WTC11 (cell line): ENCODE measurements at regions of chr1 and their contacts with region 1.

Region 1: DNA sequence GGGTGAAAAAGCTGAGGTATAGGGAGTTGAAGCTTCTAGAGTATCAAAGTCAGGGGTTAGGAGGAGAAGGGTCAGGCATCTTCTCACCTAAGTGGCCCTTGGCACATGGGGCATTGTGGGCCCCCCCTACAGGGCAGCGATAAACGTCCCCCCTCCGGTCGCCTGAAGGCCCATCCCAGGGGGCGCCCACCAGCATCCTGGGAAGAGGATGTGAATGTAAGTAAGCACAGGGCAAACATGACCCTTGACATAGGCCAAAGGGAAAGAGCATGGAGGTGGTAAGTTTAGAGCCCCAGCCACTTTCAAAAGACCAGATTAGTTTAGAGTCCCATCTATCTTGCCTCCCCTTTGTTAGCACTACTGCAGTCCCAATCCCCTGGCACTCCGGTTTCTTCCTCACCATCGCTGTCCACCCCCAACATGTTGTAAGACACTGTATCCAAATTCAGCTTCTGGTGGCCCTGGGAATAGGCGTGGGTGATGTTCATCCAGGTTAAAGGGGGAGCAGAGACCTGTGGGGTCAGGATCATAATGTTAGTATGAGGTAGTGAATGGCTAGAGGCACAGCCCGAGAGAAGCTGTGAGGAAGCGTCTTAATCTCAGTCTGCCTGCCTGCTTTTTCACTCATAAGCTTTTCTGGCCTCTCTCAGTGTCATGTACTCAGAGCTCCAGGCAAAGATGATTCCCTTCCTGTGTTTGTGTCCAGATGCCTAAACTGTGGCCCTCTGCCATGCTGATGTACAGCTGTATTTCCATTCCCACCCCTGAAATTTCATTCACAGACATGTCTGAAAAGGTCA is 2.7 kb downstream of the ITGA10 start:
- DNase-seq: no peak
- ATAC-seq: peak; percentile 25; the same call in 1 of the 2 replicates
- H3K4me3 Mint-ChIP-seq: no peak overlapping the region
- H3K27ac Mint-ChIP-seq: no peak overlapping the region
- H3K4me1 Mint-ChIP-seq: peaks cover 14% of the 10 kb centered on the region
- H3K27me3 Mint-ChIP-seq: peaks cover 3% of the 10 kb centered on the region
- CTCF ChIP-seq: no peak

Region 2: DNA sequence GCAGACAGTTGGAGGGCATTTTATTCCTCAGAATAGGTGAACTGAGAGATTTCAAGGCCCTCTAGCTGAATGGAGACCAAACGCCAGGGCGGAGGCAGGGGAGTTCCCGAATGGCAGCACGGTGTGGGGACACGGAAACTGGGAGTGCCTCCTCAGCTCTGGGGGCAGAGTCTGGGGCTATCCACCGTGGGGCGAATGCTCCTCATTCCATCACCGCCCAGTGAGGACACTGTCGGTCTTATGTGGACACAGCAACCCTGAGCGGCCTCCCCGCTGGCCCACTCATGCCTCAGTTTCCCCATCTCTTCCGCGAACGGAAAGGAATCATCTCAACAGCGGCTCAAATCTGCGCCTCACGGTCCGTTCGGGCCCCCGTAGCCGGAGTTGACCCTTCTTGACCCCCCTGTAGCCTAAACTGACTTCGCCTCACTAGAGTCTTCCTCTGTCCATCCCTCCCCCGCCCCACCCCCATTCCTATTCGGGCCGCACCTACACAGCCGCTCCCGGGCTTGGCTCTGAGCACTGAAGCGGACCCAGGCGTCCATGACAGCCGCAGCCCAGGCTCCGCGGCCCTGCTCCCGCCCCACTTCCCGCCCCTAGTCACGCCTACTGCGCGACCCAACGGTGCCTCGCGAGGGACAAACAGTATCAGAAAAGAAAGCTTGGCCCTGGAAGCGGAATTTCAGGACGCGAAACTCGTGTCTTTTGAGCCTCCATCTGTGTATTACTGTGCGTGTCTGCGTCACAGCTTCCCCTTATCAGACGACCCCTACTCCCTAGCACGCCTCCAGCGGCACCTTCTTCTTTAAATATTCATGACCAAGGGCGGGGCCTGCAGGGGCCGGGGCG is 11.2 kb after region 1 on chr1 and contains the start of gene PEX11B:
- CTCF ChIA-PET with region 1: interaction called, 11 read pairs
- POLR2A ChIA-PET with region 1: no interaction called
- DNase-seq: peak; percentile 87
- ATAC-seq: peak; percentile 89
- H3K4me3 Mint-ChIP-seq: peak within 1 kb of the TSS; percentile 86
- H3K27ac Mint-ChIP-seq: peak within 1 kb of the TSS; percentile 78
- H3K4me1 Mint-ChIP-seq: peaks cover 19% of the 10 kb centered on the region
- H3K27me3 Mint-ChIP-seq: peaks cover 10% of the 10 kb centered on the region
- CTCF ChIP-seq: no peak
- total RNA-seq, gene PEX11B: 10.9 to 12.5 TPM (median 11.8 TPM) in 3 replicates

Region 3: DNA sequence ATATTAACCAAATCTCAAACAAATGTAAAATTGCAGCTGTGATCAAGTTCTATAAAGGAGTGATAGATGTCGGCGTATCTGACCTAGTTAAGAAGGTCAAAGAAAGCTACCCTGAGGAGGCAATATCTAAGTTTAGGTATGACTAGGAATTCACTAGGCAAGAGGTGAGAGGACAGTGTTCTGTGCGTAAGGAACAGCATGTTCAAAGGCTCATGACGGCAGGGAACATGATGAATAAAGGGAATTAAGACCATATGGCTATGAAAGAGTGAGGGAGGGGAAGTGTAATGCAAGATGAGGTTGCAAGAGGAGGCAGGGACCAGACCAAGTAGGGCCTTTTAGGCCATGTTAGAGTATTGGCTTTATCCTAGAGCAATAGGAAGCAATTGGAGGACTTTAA is 42.1 kb after region 1 on chr1:
- CTCF ChIA-PET with region 1: no interaction called
- POLR2A ChIA-PET with region 1: no interaction called
- DNase-seq: no peak
- ATAC-seq: no peak
- H3K4me3 Mint-ChIP-seq: no peak overlapping the region
- H3K27ac Mint-ChIP-seq: no peak overlapping the region
- H3K4me1 Mint-ChIP-seq: peaks cover 19% of the 10 kb centered on the region
- H3K27me3 Mint-ChIP-seq: peaks cover 15% of the 10 kb centered on the region
- CTCF ChIP-seq: no peak